ENCODE measurements at regions of chr5 and their contacts with region 1.

Region 1: GRCh38 chr5:178120868-178121357 is 7.6 kb downstream of the N4BP3 start:
- DNase-seq: peak; percentile 73 to 95 (median 86)
- ATAC-seq: peak; percentile 70 to 82
- H3K4me3 Mint-ChIP-seq: peak overlapping the region; percentile 58 to 83 (median 72)
- H3K27ac Mint-ChIP-seq: peak overlapping the region; percentile 30 to 95 (median 83)
- H3K4me1 Mint-ChIP-seq: peaks cover 22 to 81% (median 69%) of the 10 kb centered on the region in 4 donors
- H3K27me3 Mint-ChIP-seq: no peaks in the 10 kb centered on the region

Region 2: DNA sequence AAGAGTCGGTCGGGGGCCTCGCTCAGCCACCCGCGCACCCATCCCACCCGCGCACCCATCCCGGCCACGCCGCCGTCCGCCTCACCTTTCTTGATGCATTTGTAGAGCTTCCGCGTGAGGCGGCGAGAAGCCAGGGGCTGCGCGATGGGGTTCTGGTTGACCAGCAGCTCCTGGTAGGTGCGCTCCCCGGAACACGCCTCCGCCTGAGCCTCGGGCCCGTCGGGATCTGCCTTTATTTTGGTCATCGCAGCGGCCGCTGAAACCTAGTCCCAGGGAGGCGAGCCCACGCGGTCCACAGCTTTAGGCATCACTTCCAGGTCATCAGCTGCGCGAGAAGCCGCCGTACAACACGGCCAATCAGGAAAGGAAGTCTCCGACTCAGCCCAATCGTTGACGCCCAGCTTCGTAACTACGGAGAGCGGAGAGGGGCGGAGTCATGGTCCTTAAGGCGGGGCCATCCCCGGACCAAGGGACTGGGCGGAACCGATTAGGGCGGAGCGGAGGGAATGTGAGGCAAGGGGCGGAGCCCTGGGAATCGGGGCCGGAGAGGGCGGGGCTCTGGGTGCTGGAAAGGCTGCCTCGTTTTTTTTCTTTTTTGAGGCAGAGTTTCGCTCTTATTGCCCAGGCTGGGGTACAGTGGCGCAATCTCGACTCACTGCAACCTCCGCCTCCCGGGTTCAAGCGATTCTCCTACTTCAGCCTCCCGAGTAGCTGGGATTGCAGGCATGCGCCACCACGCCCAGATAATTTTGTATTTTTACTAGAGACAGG is 32.8 kb after region 1 on chr5 and contains the start of gene NHP2:
- POLR2A ChIA-PET with region 1: interaction called, 11 read pairs
- DNase-seq: peak; percentile 91 to 98 (median 95)
- ATAC-seq: peak; percentile 98
- H3K4me3 Mint-ChIP-seq: peak within 1 kb of the TSS; percentile 88 to 98 (median 97)
- H3K27ac Mint-ChIP-seq: peak within 1 kb of the TSS; percentile 89 to 97 (median 94)
- H3K4me1 Mint-ChIP-seq: peaks cover 12 to 46% (median 41%) of the 10 kb centered on the region in 4 donors
- H3K27me3 Mint-ChIP-seq: no peaks in the 10 kb centered on the region
- polyA plus RNA-seq, gene NHP2: 238 to 276 (median 270) TPM